ENCODE measurements at regions of chr12 and their contacts with region 1.

Region 1: DNA sequence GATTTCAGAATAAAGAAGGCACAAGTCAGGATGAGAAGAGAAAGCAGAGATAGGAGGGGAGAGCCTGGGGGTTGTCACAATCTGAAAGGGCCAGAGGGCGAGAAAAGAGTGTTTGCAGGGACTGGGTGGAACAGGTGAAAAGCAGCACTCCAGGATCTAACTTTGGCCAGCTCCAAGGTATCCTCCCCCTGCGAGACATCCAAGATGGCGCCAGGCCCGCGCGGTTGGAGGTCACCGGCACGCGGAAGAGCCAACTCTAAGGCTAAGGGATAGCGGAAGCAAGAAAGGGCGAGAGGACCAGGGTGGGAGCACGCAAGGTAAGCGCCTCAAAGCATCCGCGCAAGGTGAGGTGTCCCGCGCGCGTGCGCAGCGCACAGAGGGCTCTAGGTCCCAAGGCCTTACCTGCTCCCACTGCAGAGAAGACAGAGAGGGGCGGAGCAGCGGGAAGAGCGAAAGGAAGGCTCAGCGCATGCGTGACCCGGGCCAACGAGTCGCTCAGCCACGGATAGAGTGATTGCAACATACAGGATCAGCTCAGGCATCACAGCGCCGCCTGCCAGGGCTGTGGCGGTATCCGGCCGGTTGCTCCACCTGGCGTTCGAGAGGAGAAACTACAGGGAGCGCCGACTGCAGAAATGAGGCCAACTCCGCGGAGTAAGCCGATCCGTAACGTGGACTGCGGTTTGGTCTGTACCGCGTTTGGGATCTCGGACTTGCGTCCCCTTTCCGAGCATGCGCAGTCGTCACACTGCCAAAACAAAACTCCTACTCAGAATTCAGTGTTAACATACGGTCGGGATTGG is at the start of gene ATP5MC2:
- DNase-seq: peak; percentile 96 to 99 (median 97)
- ATAC-seq: peak; percentile 90
- H3K4me3 ChIP-seq: peak within 1 kb of the TSS; percentile 67 to 92
- H3K4me3 Mint-ChIP-seq: peak within 1 kb of the TSS; percentile 92
- H3K27ac ChIP-seq: peak within 1 kb of the TSS; percentile 60 to 84
- H3K27ac Mint-ChIP-seq: peak within 1 kb of the TSS; percentile 95
- H3K4me1 ChIP-seq: peaks cover 14% of the 10 kb centered on the region
- H3K4me1 Mint-ChIP-seq: peaks cover 36% of the 10 kb centered on the region
- H3K27me3 ChIP-seq: peaks cover 0 to 16% of the 10 kb centered on the region in 2 experiments
- H3K27me3 Mint-ChIP-seq: peaks cover 16% of the 10 kb centered on the region
- CTCF ChIP-seq: peak; percentile 99
- total RNA-seq, gene ATP5MC2: 220 to 229 TPM

Region 2: DNA sequence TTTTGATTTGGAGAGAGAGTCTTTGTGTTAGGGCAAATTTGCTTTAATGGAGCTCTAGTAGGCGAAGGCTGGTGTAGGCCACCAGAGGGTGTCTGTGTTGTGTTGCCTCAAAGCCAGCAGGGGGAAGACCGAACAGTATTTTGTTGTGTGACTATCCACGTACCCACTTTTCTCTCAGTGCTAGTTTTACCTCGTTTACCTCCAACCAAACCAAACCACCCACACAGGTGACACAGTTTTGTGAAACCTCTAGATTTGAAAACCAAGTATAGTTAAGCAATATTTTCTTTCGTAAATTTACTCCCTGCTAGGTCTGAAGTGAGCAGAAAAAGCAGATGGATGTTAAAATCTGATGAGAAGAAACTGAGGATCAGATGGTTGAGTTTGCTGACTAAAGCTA is 132.3 kb before region 1 on chr12:
- CTCF ChIA-PET with region 1: interaction called, 44 read pairs
- POLR2A ChIA-PET with region 1: interaction called, 8 read pairs
- intact Hi-C with region 1: loop called (anchors 1 kb)
- DNase-seq: peak; percentile 4 to 75 (median 34)
- ATAC-seq: peak; percentile 97
- H3K4me3 ChIP-seq: no peak overlapping the region
- H3K4me3 Mint-ChIP-seq: no peak overlapping the region
- H3K27ac ChIP-seq: no peak overlapping the region
- H3K27ac Mint-ChIP-seq: peak overlapping the region; percentile 76
- H3K4me1 ChIP-seq: peaks cover 6% of the 10 kb centered on the region
- H3K4me1 Mint-ChIP-seq: peaks cover 14% of the 10 kb centered on the region
- H3K27me3 ChIP-seq: no peaks in the 10 kb centered on the region
- H3K27me3 Mint-ChIP-seq: no peaks in the 10 kb centered on the region
- CTCF ChIP-seq: peak; percentile 68

Region 3: GRCh38 chr12:53600490-53601295 is 75.2 kb before region 1 on chr12:
- CTCF ChIA-PET with region 1: interaction called, 5 read pairs
- POLR2A ChIA-PET with region 1: no interaction called
- intact Hi-C with region 1: loop called in 1 of 2 experiments (anchors 1 kb)
- DNase-seq: no peak
- ATAC-seq: no peak
- H3K4me3 ChIP-seq: no peak overlapping the region
- H3K4me3 Mint-ChIP-seq: no peak overlapping the region
- H3K27ac ChIP-seq: no peak overlapping the region
- H3K27ac Mint-ChIP-seq: no peak overlapping the region
- H3K4me1 ChIP-seq: peaks cover 5% of the 10 kb centered on the region
- H3K4me1 Mint-ChIP-seq: peaks cover 23% of the 10 kb centered on the region
- H3K27me3 ChIP-seq: no peaks in the 10 kb centered on the region
- H3K27me3 Mint-ChIP-seq: no peaks in the 10 kb centered on the region
- CTCF ChIP-seq: no peak

Region 4: GRCh38 chr12:54759751-54760150 is 1083.9 kb after region 1 on chr12:
- CTCF ChIA-PET with region 1: no interaction called
- POLR2A ChIA-PET with region 1: no interaction called
- intact Hi-C with region 1: no loop called
- DNase-seq: peak in 2 of 9 experiments; percentile 24 to 48
- ATAC-seq: no peak
- H3K4me3 ChIP-seq: no peak overlapping the region
- H3K4me3 Mint-ChIP-seq: no peak overlapping the region
- H3K27ac ChIP-seq: no peak overlapping the region
- H3K27ac Mint-ChIP-seq: no peak overlapping the region
- H3K4me1 ChIP-seq: no peaks in the 10 kb centered on the region
- H3K4me1 Mint-ChIP-seq: peaks cover 9% of the 10 kb centered on the region
- H3K27me3 ChIP-seq: no peaks in the 10 kb centered on the region
- H3K27me3 Mint-ChIP-seq: no peaks in the 10 kb centered on the region
- CTCF ChIP-seq: no peak